IMR-90 (cell line): ENCODE measurements at regions of chr1 and their contacts with region 1.

Region 1: DNA sequence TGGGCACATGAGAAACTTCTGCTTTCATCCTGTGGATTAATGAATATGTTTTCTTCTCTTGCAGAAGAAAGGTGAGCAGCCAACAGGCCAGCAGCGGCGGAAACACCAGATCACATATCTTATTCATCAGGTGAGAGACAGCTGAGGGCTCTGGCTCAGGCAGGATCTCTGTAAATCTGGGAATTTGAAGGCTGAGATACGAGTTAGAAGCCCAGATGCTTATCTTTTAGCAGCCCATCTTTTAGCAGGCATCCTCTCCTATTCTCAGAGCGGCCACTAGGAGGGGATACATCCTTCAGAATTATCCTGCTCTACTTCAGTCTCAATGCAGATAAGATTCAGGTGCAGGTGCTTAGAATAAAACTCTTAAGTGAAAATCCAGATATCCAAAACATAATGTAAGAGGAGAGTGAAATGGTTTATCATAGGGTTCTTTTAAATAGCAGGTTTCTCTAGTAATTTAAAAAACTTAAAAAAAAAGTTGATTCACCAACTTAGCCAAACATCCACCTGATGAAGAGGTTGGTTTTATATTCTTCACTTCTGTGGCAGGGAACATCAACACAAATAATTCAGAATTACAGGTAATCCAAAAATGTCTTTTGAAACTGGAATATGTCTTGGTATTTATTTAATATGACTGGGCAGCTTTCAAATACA is 19.3 kb downstream of the SH2D2A start:
- DNase-seq: peak; percentile 64
- ATAC-seq: peak; percentile 69
- H3K4me3 ChIP-seq: no peak overlapping the region
- H3K27ac ChIP-seq: no peak overlapping the region
- H3K4me1 ChIP-seq: peaks cover 9% of the 10 kb centered on the region
- H3K27me3 ChIP-seq: no peaks in the 10 kb centered on the region
- CTCF ChIP-seq: peak; percentile 82
- POLR2A ChIP-seq: no peak
- RAD21 ChIP-seq: peak; percentile 80

Region 2: DNA sequence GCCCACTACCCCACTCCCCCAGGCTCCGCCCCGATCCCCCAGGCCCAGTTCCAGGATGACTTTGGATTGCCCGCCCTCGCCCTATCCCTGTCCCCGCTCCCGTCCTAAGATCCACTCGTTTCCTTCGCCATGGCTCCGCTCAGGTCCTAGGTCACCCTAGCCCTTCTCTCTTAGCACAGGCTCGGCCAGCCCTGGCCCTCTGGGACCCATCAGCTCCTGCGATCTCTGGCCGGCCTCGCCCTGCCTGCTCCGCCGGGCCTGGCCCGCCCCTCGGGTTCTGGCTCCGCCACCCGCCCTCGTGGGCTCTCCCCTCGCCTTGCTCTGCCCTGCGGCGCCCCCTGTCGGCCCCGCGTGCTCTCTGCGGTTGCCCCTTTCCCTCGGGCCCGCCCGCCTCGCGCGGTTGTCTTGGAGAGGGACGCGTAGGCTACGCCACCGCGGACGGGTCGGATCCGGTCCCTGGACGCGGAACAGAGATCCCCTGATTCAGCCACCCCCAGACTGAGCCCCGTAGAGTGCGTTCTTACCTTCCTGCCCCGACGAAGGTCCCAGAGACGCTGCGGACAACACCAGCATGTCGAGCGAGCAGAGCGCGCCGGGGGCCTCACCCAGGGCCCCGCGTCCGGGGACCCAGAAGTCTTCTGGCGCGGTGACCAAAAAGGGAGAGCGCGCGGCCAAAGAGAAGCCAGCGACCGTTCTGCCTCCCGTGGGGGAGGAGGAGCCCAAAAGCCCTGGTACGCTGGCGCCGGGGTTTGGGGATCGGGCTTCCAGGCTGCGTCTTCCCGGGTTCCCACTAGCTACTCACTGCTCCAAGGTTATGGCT is 123.1 kb after region 1 on chr1 and contains the start of gene LRRC71:
- CTCF ChIA-PET with region 1: interaction called, 3 read pairs
- POLR2A ChIA-PET with region 1: no interaction called
- dilution Hi-C with region 1: no loop called
- in situ Hi-C with region 1: no loop called
- intact Hi-C with region 1: loop called (anchors 5 kb)
- DNase-seq: peak; percentile 64
- ATAC-seq: peak; percentile 98
- H3K4me3 ChIP-seq: peak within 1 kb of the TSS; percentile 36
- H3K27ac ChIP-seq: no peak within 1 kb of the TSS; the same call in 1 of the 2 replicates
- H3K4me1 ChIP-seq: peaks cover 2% of the 10 kb centered on the region
- H3K27me3 ChIP-seq: peaks cover 48% of the 10 kb centered on the region
- CTCF ChIP-seq: peak; percentile 98
- POLR2A ChIP-seq: no peak; the same call in 1 of the 2 replicates
- RAD21 ChIP-seq: peak; percentile 95
- total RNA-seq, gene LRRC71: not detected in 2 replicates

Region 3: DNA sequence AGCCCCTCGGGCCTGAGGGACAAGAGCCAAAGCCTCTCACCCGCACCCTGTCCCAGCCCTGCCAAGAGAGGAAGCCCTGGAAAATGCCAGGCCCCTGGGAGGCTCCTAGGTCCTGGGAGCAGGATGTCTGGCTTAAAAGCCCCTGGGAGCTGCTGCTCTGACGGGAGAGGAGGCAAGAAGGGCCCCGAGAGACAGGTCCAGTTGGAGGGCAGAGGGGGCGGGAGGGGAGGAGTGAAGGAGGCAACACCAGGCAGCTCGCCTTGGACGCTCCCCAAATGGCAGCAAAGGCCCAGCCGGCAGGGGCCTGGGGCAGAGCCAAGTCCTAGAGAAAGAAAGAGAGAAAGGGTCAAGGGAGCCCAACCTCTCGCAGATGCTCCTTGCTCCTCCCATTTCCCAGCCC is 295.5 kb after region 1 on chr1:
- CTCF ChIA-PET with region 1: no interaction called
- POLR2A ChIA-PET with region 1: no interaction called
- dilution Hi-C with region 1: no loop called
- in situ Hi-C with region 1: no loop called
- intact Hi-C with region 1: no loop called
- DNase-seq: no peak
- ATAC-seq: peak; percentile 13
- H3K4me3 ChIP-seq: no peak overlapping the region
- H3K27ac ChIP-seq: no peak overlapping the region
- H3K4me1 ChIP-seq: no peaks in the 10 kb centered on the region; the same call in 1 of the 2 replicates
- H3K27me3 ChIP-seq: 0 out of 2 replicates have a peak, but pooled peaks cover 3% of the 10 kb centered on the region
- CTCF ChIP-seq: no peak
- POLR2A ChIP-seq: no peak
- RAD21 ChIP-seq: no peak